ENCODE measurements at regions of chr6 and their contacts with region 1.

Region 1: DNA sequence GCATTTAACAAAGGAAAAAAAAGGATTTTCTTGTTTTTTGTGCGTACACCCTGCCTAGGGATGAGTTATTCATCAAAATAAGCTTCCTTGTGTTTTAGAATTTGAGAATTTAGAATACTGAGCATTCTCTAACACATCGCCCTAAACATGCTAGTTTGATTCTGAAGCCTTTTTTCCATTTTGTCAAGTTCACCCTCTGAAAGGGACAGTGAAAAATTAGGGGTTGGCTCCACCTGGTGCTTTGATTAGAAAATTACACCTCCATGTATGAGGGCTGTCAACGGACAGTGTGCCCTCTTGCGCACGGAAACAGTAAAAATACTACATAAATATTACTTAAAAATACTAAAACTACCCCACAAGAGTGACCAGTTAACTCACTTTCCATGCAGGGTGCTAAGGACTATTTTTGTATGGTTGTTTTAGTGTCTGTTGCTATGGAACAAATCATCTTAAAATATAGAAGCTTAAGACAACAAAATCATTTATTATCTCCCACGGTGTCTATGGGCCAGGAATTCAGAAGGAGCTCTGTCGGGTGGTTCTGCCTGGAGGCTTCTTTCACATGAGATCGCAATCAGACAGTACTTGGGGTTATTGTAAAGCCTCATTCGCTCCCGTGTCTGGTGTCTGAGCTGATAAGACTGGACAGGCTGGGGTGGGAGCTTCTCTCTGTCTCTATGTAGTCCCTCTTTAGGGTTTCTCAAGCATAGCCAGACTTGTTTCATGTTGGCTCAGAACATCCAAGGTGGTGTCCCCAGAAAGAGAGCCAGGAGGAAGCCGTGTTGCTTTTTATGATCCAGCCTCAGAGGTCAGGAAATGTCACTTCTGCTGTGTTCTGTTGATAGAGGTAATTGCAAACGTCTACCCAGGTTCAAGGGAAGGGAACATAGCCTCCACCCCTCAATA is 41.1 kb upstream of the TMEM170B start:
- DNase-seq: peak; percentile 84
- H3K4me3 ChIP-seq: no peak overlapping the region
- H3K27ac ChIP-seq: no peak overlapping the region
- H3K4me1 ChIP-seq: peaks cover 28% of the 10 kb centered on the region
- CTCF ChIP-seq: peak; percentile 100

Region 2: GRCh38 chr6:10954590-10955010 is 541.8 kb before region 1 on chr6:
- CTCF ChIA-PET with region 1: no interaction called
- POLR2A ChIA-PET with region 1: no interaction called
- intact Hi-C with region 1: loop called (anchors 5 kb)
- DNase-seq: peak; percentile 71
- H3K4me3 ChIP-seq: no peak overlapping the region
- H3K27ac ChIP-seq: no peak overlapping the region
- H3K4me1 ChIP-seq: no peaks in the 10 kb centered on the region
- CTCF ChIP-seq: peak; percentile 92

Region 3: GRCh38 chr6:11144393-11144851 is 352.0 kb before region 1 on chr6:
- CTCF ChIA-PET with region 1: interaction called, 3 read pairs
- POLR2A ChIA-PET with region 1: interaction called, 6 read pairs
- intact Hi-C with region 1: loop called (anchors 1 kb)
- DNase-seq: peak; percentile 71
- H3K4me3 ChIP-seq: no peak overlapping the region
- H3K27ac ChIP-seq: no peak overlapping the region
- H3K4me1 ChIP-seq: no peaks in the 10 kb centered on the region
- CTCF ChIP-seq: peak; percentile 98

Region 4: GRCh38 chr6:11172501-11173332 is 323.7 kb before region 1 on chr6:
- CTCF ChIA-PET with region 1: interaction called, 11 read pairs
- POLR2A ChIA-PET with region 1: interaction called, 6 read pairs
- intact Hi-C with region 1: loop called (anchors 1 kb)
- DNase-seq: peak; percentile 66
- H3K4me3 ChIP-seq: no peak overlapping the region
- H3K27ac ChIP-seq: no peak overlapping the region
- H3K4me1 ChIP-seq: no peaks in the 10 kb centered on the region
- CTCF ChIP-seq: peak; percentile 94

Region 5: GRCh38 chr6:11522817-11523605 is 26.6 kb after region 1 on chr6:
- CTCF ChIA-PET with region 1: no interaction called
- POLR2A ChIA-PET with region 1: no interaction called
- intact Hi-C with region 1: no loop called
- DNase-seq: no peak
- H3K4me3 ChIP-seq: no peak overlapping the region
- H3K27ac ChIP-seq: no peak overlapping the region
- H3K4me1 ChIP-seq: peaks cover 21% of the 10 kb centered on the region
- CTCF ChIP-seq: no peak

Measured in OCI-LY7 (cell line).